AG04450 (cell line): ENCODE measurements at regions of chr14 and their contacts with region 1.

Region 1: DNA sequence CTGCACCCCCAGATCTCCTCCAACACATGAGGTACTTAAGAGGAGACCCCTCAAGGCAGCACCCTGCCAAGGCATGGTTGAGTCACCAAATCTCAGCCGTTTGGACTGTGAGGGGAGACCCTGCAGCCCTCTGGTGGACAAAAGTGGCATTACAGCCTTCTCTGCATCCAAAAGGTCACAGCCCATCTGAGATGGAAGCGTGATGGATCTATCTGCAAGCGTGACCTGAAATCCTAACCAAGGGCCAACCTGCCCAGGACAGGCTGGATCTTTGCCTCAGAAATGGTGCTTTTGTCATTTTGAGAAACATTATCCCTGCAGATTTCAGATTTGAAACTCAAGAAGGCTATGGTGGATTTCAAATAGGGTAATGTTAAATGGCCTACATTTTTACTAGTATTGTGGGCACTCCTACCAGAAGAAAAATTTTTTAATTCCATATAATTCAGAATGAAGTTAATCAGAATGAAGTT is 23.7 kb upstream of the DHRS4 start:
- DNase-seq: peak; percentile 53
- H3K4me3 ChIP-seq: no peak overlapping the region
- H3K27ac ChIP-seq: no peak overlapping the region
- H3K27me3 ChIP-seq: peaks cover 4% of the 10 kb centered on the region
- CTCF ChIP-seq: peak; percentile 96

Region 2: GRCh38 chr14:23588884-23589598 is 340.8 kb before region 1 on chr14:
- CTCF ChIA-PET with region 1: interaction called, 23 read pairs
- POLR2A ChIA-PET with region 1: no interaction called
- DNase-seq: peak; percentile 60
- H3K4me3 ChIP-seq: no peak overlapping the region
- H3K27ac ChIP-seq: no peak overlapping the region
- H3K27me3 ChIP-seq: no peaks in the 10 kb centered on the region
- CTCF ChIP-seq: peak; percentile 79

Region 3: DNA sequence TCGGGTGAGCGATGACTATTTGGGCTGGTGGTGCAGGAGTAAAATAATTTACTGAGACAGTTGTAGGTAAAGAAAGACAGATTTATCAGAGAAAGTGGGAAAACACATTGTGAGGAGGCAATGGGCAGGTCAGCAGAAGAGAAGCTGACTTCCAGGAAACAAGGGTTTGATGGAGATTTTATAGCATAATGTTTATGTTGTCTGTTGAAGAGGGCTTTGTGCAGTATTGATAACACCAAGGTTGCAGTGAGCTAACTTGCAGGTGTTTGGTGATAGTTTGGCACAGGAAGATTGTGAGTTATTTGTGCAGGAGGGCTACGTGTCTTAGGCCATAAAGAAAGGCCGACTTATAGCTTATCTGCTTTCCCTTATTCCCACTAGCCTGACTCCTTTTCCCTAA is 221.5 kb before region 1 on chr14:
- CTCF ChIA-PET with region 1: no interaction called
- POLR2A ChIA-PET with region 1: no interaction called
- DNase-seq: no peak
- H3K4me3 ChIP-seq: no peak overlapping the region
- H3K27ac ChIP-seq: no peak overlapping the region
- H3K27me3 ChIP-seq: no peaks in the 10 kb centered on the region
- CTCF ChIP-seq: no peak

Region 4: DNA sequence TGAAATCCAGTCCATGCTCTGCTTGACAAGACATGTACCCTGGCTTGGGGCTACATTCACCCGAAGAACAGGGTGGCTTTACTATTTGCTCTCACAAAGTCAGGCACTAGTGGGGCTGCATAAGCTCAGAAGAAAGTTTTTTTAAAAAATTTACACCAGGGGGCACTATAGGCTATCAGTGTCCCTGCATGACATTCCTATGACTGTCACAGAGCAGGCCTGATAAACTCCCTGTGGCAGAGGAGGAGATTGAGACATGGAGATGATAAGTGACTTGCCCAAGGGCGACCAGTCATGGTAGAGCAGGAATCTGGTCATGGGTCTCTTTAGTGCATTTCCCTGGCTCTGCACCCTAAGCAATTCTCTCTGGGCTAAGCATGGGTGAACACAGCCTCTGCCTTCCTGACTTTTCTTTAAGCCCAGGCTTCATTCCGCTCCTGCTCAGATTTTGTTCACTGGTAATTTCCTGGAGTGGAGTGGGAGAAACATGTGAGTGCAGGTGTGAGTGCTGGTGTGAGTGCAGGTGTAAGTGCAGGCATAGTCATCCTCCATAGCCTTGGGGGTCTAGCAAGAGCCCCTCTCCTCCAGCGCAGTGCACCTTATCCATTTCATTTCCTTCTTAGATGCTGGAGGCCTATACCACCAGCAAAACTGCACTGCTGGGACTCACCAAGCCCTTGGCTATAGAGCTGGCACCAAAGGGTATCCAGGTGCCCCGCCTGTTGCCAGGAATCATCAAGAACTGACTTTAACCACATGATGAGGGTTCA is 202.1 kb before region 1 on chr14:
- CTCF ChIA-PET with region 1: interaction called, 14 read pairs
- POLR2A ChIA-PET with region 1: no interaction called
- DNase-seq: no peak
- H3K4me3 ChIP-seq: no peak overlapping the region
- H3K27ac ChIP-seq: no peak overlapping the region
- H3K27me3 ChIP-seq: no peaks in the 10 kb centered on the region
- CTCF ChIP-seq: peak; percentile 27

Region 5: GRCh38 chr14:23861666-23862065 is 68.2 kb before region 1 on chr14:
- CTCF ChIA-PET with region 1: no interaction called
- POLR2A ChIA-PET with region 1: no interaction called
- DNase-seq: no peak
- H3K4me3 ChIP-seq: no peak overlapping the region
- H3K27ac ChIP-seq: no peak overlapping the region
- H3K27me3 ChIP-seq: no peaks in the 10 kb centered on the region
- CTCF ChIP-seq: no peak

Region 6: DNA sequence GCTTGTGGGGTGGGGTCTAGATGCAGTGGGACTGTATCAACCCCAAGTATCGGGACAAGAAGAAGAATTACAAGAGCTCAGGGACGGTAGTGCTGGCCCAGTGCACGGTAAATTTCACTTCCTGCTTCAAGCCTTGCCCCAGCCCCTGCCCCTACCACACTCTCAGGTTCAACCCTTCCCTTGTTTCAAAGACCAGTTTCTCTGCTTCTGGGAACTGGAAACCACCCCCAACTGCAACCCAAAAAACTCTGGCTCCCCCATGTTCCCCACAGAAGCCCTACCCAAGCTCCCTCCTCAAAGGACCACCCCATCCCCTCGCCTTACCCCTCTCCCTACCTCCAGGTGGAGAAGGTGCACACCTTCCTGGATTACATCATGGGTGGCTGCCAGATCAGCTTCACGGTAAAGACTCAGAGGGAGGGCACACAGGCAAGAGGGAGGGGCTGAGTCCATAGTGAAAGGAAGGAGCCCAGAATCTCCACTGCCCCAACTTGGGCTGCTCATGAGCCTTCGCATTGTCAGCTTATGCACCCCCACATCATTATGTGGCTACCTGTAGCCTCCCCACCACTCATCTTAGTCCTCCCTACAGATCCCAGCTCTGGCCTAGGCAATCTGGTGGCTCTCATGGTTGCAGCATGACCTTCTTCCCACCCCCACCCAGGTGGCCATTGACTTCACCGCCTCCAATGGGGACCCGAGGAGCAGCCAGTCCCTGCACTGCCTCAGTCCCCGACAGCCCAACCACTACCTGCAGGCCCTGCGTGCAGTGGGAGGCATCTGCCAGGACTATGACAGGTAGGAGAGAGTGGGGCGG is 145.8 kb after region 1 on chr14:
- CTCF ChIA-PET with region 1: no interaction called
- POLR2A ChIA-PET with region 1: no interaction called
- DNase-seq: no peak
- H3K4me3 ChIP-seq: no peak overlapping the region
- H3K27ac ChIP-seq: no peak overlapping the region
- H3K27me3 ChIP-seq: peaks cover 57% of the 10 kb centered on the region
- CTCF ChIP-seq: no peak